Activated CD4-positive, alpha-beta T cell treated with anti-CD3 and anti-CD28 coated beads, Interleukin-2, amount 10 ng/mL, durations not matched to agents 7 days and 5 days (primary cell): ENCODE measurements at regions of chr1 and their contacts with region 1.

Region 1: DNA sequence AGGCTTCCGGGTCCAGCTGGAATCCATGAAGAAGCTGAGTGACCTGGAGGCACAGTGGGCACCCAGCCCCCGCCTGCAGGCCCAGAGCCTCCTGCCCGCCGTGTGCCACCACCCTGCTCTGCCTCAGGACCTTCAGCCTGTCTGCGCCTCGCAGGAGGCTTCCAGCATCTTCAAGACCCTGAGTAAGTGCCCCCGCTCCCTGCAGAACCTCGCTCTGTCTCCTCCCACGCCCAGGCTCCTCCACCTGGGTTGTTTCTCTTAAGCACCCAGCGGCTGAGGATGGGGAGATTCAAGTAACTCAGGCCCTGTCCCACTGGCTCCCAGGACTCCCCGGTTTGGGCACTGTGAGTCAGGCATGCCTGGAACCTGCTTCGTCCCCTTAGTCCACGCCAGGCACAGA is 1.5 kb downstream of the GUCA2B start:
- DNase-seq: no peak
- H3K4me3 Mint-ChIP-seq: no peak overlapping the region
- H3K27ac Mint-ChIP-seq: no peak overlapping the region
- H3K4me1 Mint-ChIP-seq: peaks cover 7% of the 10 kb centered on the region
- H3K27me3 Mint-ChIP-seq: peaks cover 13% of the 10 kb centered on the region

Region 2: GRCh38 chr1:42173155-42173933 is 18.7 kb after region 1 on chr1:
- CTCF ChIA-PET with region 1: interaction called, 12 read pairs
- POLR2A ChIA-PET with region 1: no interaction called
- DNase-seq: peak; percentile 68
- H3K4me3 Mint-ChIP-seq: no peak overlapping the region
- H3K27ac Mint-ChIP-seq: no peak overlapping the region
- H3K4me1 Mint-ChIP-seq: no peaks in the 10 kb centered on the region
- H3K27me3 Mint-ChIP-seq: no peaks in the 10 kb centered on the region

Region 3: GRCh38 chr1:42334240-42335049 is 179.8 kb after region 1 on chr1:
- CTCF ChIA-PET with region 1: no interaction called
- POLR2A ChIA-PET with region 1: no interaction called
- DNase-seq: peak; percentile 38
- H3K4me3 Mint-ChIP-seq: peak overlapping the region; percentile 94
- H3K27ac Mint-ChIP-seq: peak overlapping the region; percentile 91
- H3K4me1 Mint-ChIP-seq: peaks cover 46% of the 10 kb centered on the region
- H3K27me3 Mint-ChIP-seq: no peaks in the 10 kb centered on the region